K562 (cell line): ENCODE measurements at regions of chr13 and their contacts with region 1.

Region 1: DNA sequence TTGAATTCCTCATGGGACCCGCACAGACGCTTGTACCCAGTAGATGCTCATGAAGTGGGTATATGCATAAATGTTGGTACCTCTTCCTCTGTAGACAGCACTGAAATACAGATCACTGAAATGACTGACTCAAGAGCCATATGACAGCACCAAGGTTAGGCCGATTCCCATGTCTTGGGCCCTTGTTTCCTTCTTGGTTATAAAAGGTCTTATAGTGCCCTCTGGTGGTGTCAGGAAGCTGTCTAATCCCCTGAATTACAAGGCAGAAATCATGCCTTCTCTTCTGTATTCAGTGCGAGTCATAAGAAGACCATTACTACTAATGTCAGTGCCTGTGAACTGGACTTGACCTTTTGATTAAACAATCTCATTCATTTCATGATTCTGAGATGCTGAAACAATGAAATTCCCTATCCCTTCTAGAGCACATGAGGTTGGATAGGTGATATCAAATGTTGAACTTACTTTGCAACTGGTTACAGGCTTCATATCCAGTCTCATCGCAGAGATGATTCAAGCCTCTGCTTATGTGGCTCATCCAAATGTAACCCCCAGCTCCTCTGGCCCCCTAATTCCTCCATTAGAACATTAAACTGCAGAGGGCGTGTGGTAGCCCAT is 59.7 kb downstream of the SPATA13 start:
- DNase-seq: peak; percentile 35 to 66 (median 43)
- ATAC-seq: peak; percentile 91
- H3K4me3 ChIP-seq: no peak overlapping the region
- H3K27ac ChIP-seq: no peak overlapping the region
- H3K4me1 ChIP-seq: peaks cover 0 to 3% of the 10 kb centered on the region in 2 experiments; a peak in 1 of 5 replicates
- H3K27me3 ChIP-seq: peaks cover 0 to 25% of the 10 kb centered on the region in 2 experiments; a peak in 1 of 5 replicates
- CTCF ChIP-seq: peak; percentile 56 to 69 (median 63)
- EP300 ChIP-seq: no peak
- POLR2A ChIP-seq: no peak
- RAD21 ChIP-seq: peak; percentile 75 to 85

Region 2: GRCh38 chr13:23921451-23921888 is 298.7 kb before region 1 on chr13:
- CTCF ChIA-PET with region 1: no interaction called
- POLR2A ChIA-PET with region 1: no interaction called
- in situ Hi-C with region 1: loop called (anchors 25 kb)
- intact Hi-C with region 1: loop called (anchors 2 kb)
- DNase-seq: peak; percentile 12 to 18 (median 15)
- ATAC-seq: no peak
- H3K4me3 ChIP-seq: no peak overlapping the region
- H3K27ac ChIP-seq: no peak overlapping the region
- H3K4me1 ChIP-seq: no peaks in the 10 kb centered on the region
- H3K27me3 ChIP-seq: no peaks in the 10 kb centered on the region
- CTCF ChIP-seq: peak; percentile 33 to 58 (median 48); a peak in 5 of 6 replicates
- EP300 ChIP-seq: no peak
- POLR2A ChIP-seq: no peak
- RAD21 ChIP-seq: peak in 1 of 2 experiments; percentile 64; a peak in 2 of 4 replicates

Region 3: GRCh38 chr13:24020375-24020830 is 199.8 kb before region 1 on chr13:
- CTCF ChIA-PET with region 1: interaction called, 18 read pairs
- POLR2A ChIA-PET with region 1: interaction called, 3 read pairs
- in situ Hi-C with region 1: no loop called
- intact Hi-C with region 1: loop called (anchors 1 kb)
- DNase-seq: peak in 3 of 4 experiments; percentile 7 to 43 (median 29)
- ATAC-seq: peak; percentile 51; the same call in 1 of the 3 replicates
- H3K4me3 ChIP-seq: no peak overlapping the region
- H3K27ac ChIP-seq: no peak overlapping the region
- H3K4me1 ChIP-seq: no peaks in the 10 kb centered on the region
- H3K27me3 ChIP-seq: peaks cover 0 to 14% of the 10 kb centered on the region in 2 experiments; a peak in 1 of 5 replicates
- CTCF ChIP-seq: peak; percentile 50 to 63 (median 52); a peak in 4 of 6 replicates
- EP300 ChIP-seq: no peak
- POLR2A ChIP-seq: no peak
- RAD21 ChIP-seq: peak; percentile 54 to 66

Region 4: GRCh38 chr13:24053519-24054251 is 166.5 kb before region 1 on chr13:
- CTCF ChIA-PET with region 1: interaction called, 13 read pairs
- POLR2A ChIA-PET with region 1: no interaction called
- in situ Hi-C with region 1: no loop called
- intact Hi-C with region 1: loop called (anchors 1 kb)
- DNase-seq: peak; percentile 18 to 47 (median 29)
- ATAC-seq: peak; percentile 86
- H3K4me3 ChIP-seq: no peak overlapping the region
- H3K27ac ChIP-seq: no peak overlapping the region
- H3K4me1 ChIP-seq: no peaks in the 10 kb centered on the region
- H3K27me3 ChIP-seq: no peaks in the 10 kb centered on the region; a peak in 1 of 5 replicates
- CTCF ChIP-seq: peak; percentile 56 to 63 (median 56)
- EP300 ChIP-seq: no peak
- POLR2A ChIP-seq: no peak
- RAD21 ChIP-seq: peak; percentile 29 to 49; a peak in 2 of 4 replicates